ENCODE measurements at regions of chr19 and their contacts with region 1.

Region 1: DNA sequence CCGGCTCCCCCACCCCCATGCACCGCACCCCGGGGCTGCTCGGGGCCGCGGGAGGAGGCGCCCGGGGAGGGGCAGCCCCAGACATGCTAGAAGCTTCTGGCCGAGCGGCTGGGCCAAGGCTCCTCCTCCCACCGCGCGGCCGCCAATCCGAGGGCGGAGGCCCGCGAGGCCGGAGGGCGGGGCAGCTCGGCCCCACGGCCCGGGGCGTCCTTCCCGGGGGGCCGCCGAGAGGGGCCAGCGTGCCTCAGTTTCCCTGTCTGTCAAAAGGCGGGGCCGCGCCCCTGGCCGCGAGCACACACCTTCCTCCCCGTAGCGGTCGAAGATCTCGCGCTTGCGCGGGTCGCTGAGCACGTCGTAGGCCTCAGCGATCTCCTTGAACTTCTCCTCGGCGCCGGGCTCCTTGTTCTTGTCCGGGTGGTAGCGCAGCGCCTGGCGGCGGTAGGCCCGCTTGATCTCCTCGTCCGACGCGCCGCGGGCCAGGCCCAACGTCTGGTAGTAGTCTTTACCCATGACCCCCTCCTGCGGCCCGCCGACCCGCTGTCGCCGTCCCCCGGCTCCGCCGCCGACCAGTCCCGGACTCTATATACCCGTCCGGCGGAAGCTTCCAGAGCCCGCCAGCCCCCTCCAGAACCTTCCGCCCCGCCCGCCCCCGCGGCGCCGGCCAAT is at the start of gene DNAJB1:
- DNase-seq: peak; percentile 88 to 93 (median 89)
- ATAC-seq: peak; percentile 54 to 86 (median 82)
- H3K4me3 ChIP-seq: peak within 1 kb of the TSS; percentile 66 to 100 (median 88)
- H3K27ac ChIP-seq: peak within 1 kb of the TSS; percentile 96 to 100 (median 100)
- H3K4me1 ChIP-seq: peaks cover 0 to 52% (median 39%) of the 10 kb centered on the region in 12 donors
- H3K27me3 ChIP-seq: no peaks in the 10 kb centered on the region
- CTCF ChIP-seq: no peak
- POLR2A ChIP-seq: peak; percentile 97 to 98
- total RNA-seq, gene DNAJB1: 34.7 to 70.6 (median 44.8) TPM

Region 2: DNA sequence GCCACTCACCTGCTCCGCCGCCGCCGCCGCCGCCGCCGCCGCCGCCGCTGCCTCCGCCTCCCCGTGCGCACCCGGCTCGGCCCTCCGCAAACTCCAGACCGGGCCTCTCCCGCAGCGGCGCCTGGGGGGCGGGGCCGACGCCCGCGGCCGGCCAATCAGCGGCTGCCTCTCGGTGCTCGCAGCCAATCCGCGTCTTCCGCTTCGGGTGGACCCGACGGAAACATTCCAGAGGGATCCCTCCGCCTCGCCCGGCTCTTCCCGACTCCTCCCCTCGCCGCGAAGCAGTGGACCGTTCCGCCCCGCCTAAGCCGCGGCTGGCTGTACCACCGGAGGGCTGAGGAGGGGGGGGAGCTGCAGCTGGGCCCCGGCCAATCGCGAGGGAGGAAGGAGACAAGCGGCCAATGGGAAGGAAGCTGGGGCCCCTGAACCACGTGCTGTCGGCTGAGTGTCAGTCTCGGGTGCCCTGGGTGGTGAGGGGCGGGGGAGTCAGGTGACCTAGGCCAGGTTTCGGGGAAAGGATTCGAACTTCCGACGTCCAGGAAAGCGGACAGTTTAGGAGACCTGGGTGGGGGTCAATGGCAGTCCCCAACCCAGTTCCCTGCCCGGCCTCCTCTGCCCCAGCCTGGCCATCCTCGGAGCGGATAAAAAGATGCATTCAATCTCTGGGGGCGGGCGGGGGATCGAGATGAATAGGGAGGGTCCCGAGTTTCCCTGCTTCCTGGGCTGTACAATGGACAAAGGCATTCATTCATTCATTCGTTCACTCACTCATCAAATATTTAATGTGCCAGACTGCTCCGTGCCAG is 21.7 kb before region 1 on chr19 and contains the start of gene GIPC1:
- intact Hi-C with region 1: loop called in 1 of 10 experiments (anchors 2 kb)
- DNase-seq: peak; percentile 97 to 98 (median 98)
- ATAC-seq: peak; percentile 97 to 99 (median 98)
- H3K4me3 ChIP-seq: peak within 1 kb of the TSS; percentile 64 to 96 (median 91)
- H3K27ac ChIP-seq: peak within 1 kb of the TSS in 11 of 12 donors; percentile 56 to 88 (median 75)
- H3K4me1 ChIP-seq: peaks cover 5 to 33% (median 22%) of the 10 kb centered on the region in 12 donors
- H3K27me3 ChIP-seq: no peaks in the 10 kb centered on the region
- CTCF ChIP-seq: no peak
- POLR2A ChIP-seq: peak in 1 of 2 donors; percentile 53
- total RNA-seq, gene GIPC1: 44.9 to 82.7 (median 49.3) TPM

Region 3: DNA sequence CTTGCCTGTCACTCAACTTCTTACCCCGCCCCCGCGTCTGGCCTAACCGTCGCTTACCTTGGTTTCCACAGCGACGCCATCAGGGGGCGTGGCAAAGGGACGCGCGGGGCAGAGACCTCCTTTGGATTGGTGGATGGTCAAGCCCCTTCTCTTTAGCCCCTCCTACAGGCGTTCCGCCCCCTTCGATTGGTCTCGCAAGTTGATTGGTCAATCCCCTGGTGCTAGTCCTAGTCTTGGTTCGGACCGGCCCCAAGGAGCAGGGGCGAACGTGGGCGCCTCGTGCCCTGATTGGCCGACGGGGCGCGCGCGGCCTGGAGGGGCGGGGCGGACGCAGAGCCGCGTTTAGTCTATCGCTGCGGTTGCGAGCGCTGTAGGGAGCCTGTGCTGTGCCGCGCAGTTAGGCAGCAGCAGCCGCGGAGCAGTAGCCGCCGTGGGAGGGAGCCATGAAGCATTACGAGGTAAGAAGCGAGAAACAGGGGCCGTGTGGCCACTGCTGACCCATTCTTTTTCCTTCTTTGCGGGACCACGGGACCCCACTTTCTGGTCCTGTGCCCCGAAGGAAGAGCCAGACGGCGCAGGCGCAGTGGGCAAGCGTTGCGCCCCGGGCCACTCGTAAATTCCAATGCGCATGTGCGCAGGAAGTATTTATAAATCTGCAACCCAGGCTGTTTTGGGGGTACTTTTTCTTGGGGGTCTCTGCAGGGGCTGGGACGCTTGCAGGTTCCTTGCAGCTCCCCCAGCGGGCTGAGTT is 11.5 kb after region 1 on chr19 and contains the start of gene TECR:
- intact Hi-C with region 1: loop called in 1 of 10 experiments (anchors 1 kb)
- DNase-seq: peak; percentile 99 to 100 (median 100)
- ATAC-seq: peak; percentile 97 to 99 (median 98)
- H3K4me3 ChIP-seq: peak within 1 kb of the TSS; percentile 57 to 91 (median 74)
- H3K27ac ChIP-seq: peak within 1 kb of the TSS; percentile 70 to 95 (median 86)
- H3K4me1 ChIP-seq: peaks cover 0 to 40% (median 24%) of the 10 kb centered on the region in 12 donors
- H3K27me3 ChIP-seq: no peaks in the 10 kb centered on the region
- CTCF ChIP-seq: peak in 3 of 12 donors; percentile 2 to 16 (median 13)
- POLR2A ChIP-seq: peak; percentile 71 to 97
- total RNA-seq, gene TECR: 48.1 to 88.4 (median 71.7) TPM

Measured in heart left ventricle (tissue), 16 donors.